Mammary epithelial cell (primary cell): ENCODE measurements at regions of chr14 and their contacts with region 1.

Region 1: GRCh38 chr14:99389174-99389826 is 91.4 kb downstream of the SETD3 start:
- DNase-seq: peak; percentile 21
- H3K4me3 ChIP-seq: no peak overlapping the region
- H3K27ac ChIP-seq: no peak overlapping the region
- H3K4me1 ChIP-seq: no peaks in the 10 kb centered on the region
- H3K27me3 ChIP-seq: peaks cover 3% of the 10 kb centered on the region
- CTCF ChIP-seq: peak; percentile 56 to 81

Region 2: GRCh38 chr14:99320105-99320572 is 69.2 kb before region 1 on chr14:
- CTCF ChIA-PET with region 1: interaction called, 9 read pairs
- dilution Hi-C with region 1: no loop called
- in situ Hi-C with region 1: no loop called
- intact Hi-C with region 1: loop called (anchors 2 kb)
- DNase-seq: peak; percentile 26
- H3K4me3 ChIP-seq: peak overlapping the region in 1 of 3 experiments; percentile 27
- H3K27ac ChIP-seq: no peak overlapping the region
- H3K4me1 ChIP-seq: peaks cover 13% of the 10 kb centered on the region
- H3K27me3 ChIP-seq: no peaks in the 10 kb centered on the region
- CTCF ChIP-seq: peak; percentile 86 to 96

Region 3: GRCh38 chr14:99401621-99402284 is 12.5 kb after region 1 on chr14:
- CTCF ChIA-PET with region 1: no interaction called
- dilution Hi-C with region 1: no loop called
- in situ Hi-C with region 1: no loop called
- intact Hi-C with region 1: no loop called
- DNase-seq: no peak
- H3K4me3 ChIP-seq: no peak overlapping the region
- H3K27ac ChIP-seq: no peak overlapping the region
- H3K4me1 ChIP-seq: no peaks in the 10 kb centered on the region
- H3K27me3 ChIP-seq: no peaks in the 10 kb centered on the region
- CTCF ChIP-seq: no peak